ENCODE measurements at regions of chr7 and their contacts with region 1.

Region 1: GRCh38 chr7:20172736-20173334 is 44.3 kb downstream of the MACC1 start:
- DNase-seq: peak; percentile 41
- CTCF ChIP-seq: peak; percentile 13

Region 2: DNA sequence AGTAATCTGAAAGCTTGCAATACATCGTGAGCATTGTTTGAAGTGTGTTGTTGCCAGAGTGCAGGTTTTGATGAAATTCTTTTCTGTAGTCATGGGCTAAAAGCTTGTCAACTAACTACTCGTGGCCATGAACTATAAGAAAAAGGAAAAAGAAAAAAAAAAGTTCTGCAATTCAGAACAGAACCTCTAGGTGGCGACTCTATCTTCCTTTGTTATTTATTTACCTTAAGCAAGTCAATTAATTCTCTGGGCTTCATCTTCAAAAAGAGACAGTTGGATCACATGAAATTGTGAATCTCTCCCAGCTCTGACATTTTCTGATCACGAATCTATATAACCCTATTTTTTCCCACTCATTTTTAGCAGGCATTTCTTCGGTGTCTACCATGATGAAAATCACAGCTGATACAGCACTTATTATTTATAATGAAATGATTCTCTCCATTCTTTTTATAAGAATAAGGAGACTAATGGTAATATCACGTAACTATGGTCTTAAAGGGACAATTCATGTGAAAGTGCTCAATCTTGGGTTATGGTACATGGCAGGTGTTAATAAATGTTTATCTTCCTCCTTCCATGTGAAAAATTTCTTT is 418.2 kb before region 1 on chr7:
- in situ Hi-C with region 1: loop called (anchors 25 kb)
- DNase-seq: peak; percentile 16
- CTCF ChIP-seq: peak; percentile 60